ENCODE measurements at regions of chr16 and their contacts with region 1.

Region 1: DNA sequence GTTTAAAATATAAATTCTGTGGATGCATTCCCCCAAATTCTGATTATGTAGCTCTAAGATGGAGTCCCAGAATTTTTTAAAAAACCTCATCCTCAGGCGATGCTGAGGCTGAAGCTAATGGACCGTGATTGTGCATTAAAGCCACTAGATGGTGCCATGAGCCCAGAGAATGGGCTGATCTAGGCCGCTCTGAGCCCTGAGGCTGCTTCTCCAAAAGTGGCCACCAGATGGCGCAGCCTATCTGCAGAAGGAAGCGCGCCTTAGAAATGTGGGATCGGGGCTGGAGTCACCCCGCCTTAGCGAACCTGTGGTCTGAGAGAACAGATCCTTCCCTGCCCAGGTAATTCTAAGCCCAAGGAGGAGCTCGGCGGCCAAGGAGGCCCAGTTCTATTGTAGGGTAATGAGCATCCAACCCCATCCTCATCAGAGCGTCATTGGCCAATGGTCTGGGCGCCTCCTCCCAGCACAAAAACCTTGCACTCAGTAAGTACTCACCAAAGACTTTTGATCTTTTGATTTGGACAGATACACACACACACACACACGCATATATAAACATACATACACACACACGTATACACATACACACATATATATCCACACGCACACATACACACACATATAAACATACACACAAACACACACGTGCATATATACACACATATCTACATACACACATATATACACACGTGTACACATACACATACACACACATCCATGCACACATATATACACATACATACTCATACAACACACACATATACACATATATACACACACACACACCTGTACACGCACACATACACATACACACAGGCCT is 13.7 kb upstream of the MMP2 start:
- DNase-seq: peak; percentile 83
- H3K4me3 ChIP-seq: no peak overlapping the region
- H3K27ac ChIP-seq: no peak overlapping the region
- H3K4me1 ChIP-seq: peaks cover under 1% of the 10 kb centered on the region
- H3K27me3 ChIP-seq: peaks cover 0 to 6% of the 10 kb centered on the region in 2 experiments
- CTCF ChIP-seq: peak; percentile 98 to 99
- POLR2A ChIP-seq: no peak

Region 2: GRCh38 chr16:55480228-55480661 is 15.0 kb after region 1 on chr16:
- CTCF ChIA-PET with region 1: interaction called, 22 read pairs
- POLR2A ChIA-PET with region 1: interaction called, 5 read pairs
- dilution Hi-C with region 1: no loop called
- intact Hi-C with region 1: no loop called
- DNase-seq: peak; percentile 79
- H3K4me3 ChIP-seq: peak overlapping the region; percentile 78 to 99 (median 97)
- H3K27ac ChIP-seq: peak overlapping the region; percentile 90
- H3K4me1 ChIP-seq: peaks cover 21% of the 10 kb centered on the region
- H3K27me3 ChIP-seq: no peaks in the 10 kb centered on the region
- CTCF ChIP-seq: no peak
- POLR2A ChIP-seq: peak; percentile 54

Region 3: GRCh38 chr16:55508941-55509931 is 43.9 kb after region 1 on chr16 and contains the start of gene LPCAT2:
- CTCF ChIA-PET with region 1: interaction called, 9 read pairs
- POLR2A ChIA-PET with region 1: no interaction called
- dilution Hi-C with region 1: no loop called
- intact Hi-C with region 1: loop called (anchors 2 kb)
- DNase-seq: peak; percentile 90
- H3K4me3 ChIP-seq: peak within 1 kb of the TSS; percentile 65 to 99 (median 94)
- H3K27ac ChIP-seq: peak within 1 kb of the TSS; percentile 80
- H3K4me1 ChIP-seq: peaks cover 10% of the 10 kb centered on the region
- H3K27me3 ChIP-seq: no peaks in the 10 kb centered on the region
- CTCF ChIP-seq: peak in 1 of 2 donors; percentile 4
- POLR2A ChIP-seq: peak; percentile 90
- total RNA-seq, gene LPCAT2: 72.9 and 79.1 TPM in 2 replicates

Region 4: DNA sequence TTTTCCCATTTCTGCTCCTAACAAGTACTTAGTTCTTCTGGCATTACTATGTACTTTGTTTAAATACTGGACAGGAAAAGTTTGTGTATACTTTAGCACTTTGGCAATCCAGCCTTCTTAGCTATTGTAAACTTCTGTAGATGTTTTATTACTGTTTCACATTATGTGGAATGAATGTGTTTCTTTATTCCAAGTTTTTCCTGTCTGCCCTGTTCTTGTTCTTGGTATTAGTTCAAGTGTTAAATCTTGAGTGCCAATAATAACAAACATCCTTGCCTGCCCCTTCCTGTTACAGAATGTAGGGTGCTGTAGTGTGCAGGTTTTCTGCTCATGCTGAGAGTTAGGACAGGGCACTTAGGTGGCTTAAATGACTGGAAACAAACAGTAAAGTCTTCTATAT is 93.9 kb after region 1 on chr16:
- CTCF ChIA-PET with region 1: interaction called, 10 read pairs
- POLR2A ChIA-PET with region 1: no interaction called
- dilution Hi-C with region 1: no loop called
- intact Hi-C with region 1: loop called (anchors 1 kb)
- DNase-seq: peak; percentile 91
- H3K4me3 ChIP-seq: peak overlapping the region in 1 of 3 experiments; percentile 42
- H3K27ac ChIP-seq: peak overlapping the region; percentile 68
- H3K4me1 ChIP-seq: peaks cover 69% of the 10 kb centered on the region
- H3K27me3 ChIP-seq: no peaks in the 10 kb centered on the region
- CTCF ChIP-seq: no peak
- POLR2A ChIP-seq: no peak

Region 5: GRCh38 chr16:55592306-55592705 is 127.0 kb after region 1 on chr16:
- CTCF ChIA-PET with region 1: no interaction called
- POLR2A ChIA-PET with region 1: no interaction called
- dilution Hi-C with region 1: no loop called
- intact Hi-C with region 1: no loop called
- DNase-seq: no peak
- H3K4me3 ChIP-seq: no peak overlapping the region
- H3K27ac ChIP-seq: no peak overlapping the region
- H3K4me1 ChIP-seq: no peaks in the 10 kb centered on the region
- H3K27me3 ChIP-seq: no peaks in the 10 kb centered on the region
- CTCF ChIP-seq: no peak
- POLR2A ChIP-seq: no peak

Region 6: DNA sequence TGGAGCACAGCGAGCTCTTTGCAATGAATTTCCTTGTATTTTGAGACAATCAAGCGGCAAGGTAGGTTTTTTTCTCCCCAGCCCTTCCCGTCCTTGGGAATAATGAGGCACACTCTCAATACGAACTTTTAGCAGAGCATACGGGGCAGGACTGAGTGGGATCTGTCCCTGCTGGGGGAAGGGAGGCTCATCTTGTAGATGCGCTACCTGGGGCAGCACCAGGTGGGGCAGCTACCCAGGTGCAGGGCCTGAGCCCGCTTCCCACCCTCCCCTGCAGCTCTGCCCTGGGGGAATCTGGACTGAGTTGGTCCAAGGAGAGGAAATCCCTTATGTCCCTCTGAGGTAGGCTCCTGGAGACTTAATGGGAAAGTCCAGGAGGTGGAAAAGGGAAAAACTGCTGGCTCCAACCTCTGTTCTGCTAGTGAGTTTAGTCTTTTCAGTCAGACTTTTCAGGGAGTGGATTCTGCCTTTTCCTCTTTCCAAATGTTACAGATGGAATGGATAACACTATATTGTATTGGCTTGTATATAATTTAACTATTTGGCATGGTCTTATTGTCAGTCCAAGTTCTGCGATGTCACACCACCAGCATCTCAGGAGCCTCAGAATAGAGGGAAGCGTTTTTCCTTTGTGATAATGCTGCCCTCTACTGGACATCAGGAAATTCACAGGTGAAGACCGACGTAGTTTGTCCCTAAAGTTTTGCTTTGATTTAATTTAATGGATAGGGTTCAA is 377.2 kb after region 1 on chr16:
- CTCF ChIA-PET with region 1: interaction called, 15 read pairs
- POLR2A ChIA-PET with region 1: no interaction called
- dilution Hi-C with region 1: no loop called
- intact Hi-C with region 1: loop called (anchors 1 kb)
- DNase-seq: peak; percentile 48
- H3K4me3 ChIP-seq: no peak overlapping the region
- H3K27ac ChIP-seq: no peak overlapping the region
- H3K4me1 ChIP-seq: no peaks in the 10 kb centered on the region
- H3K27me3 ChIP-seq: no peaks in the 10 kb centered on the region
- CTCF ChIP-seq: peak; percentile 47 to 56
- POLR2A ChIP-seq: no peak